Head of caudate nucleus (tissue), 42 donors: ENCODE measurements at regions of chr18 and their contacts with region 1.

Region 1: GRCh38 chr18:23099621-23100020 is 35.7 kb upstream of the CABLES1 start:
- DNase-seq: no peak

Region 2: DNA sequence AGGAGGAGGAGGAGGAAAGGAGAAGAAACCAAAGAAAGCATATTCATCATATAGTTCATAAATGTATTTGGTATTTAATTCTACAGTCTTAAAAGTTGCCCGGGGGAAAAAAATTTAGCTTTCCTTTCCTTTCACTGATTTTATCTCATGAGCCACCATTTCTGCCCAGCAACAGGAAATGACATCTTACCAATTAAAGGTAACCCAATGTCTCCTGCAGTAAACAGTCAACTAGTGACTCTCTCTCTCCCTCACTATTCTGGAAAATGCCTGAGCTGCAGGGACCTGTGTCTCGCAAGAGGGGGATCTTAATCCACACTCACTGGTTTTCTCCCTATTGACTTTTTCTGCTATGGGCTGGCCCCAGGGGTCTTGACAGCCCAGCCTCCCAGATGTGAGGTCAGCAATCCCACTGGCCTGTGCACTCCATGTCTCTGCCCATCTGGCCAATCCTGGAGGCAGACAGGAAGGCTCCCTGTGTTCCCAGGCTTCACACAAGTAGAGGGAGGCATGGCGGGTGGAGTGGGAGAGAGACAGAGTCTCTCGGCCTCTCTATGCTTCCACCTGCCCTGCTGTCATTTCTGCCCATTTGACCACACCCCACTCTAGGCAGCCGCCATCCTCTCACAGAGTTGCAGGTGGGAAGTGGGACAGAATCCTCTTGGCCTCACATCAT is 49.8 kb before region 1 on chr18:
- intact Hi-C with region 1: loop called (anchors 5 kb)
- DNase-seq: no peak